ENCODE measurements at regions of chr5 and their contacts with region 1.

Region 1: GRCh38 chr5:155418960-155419579 is 405.5 kb downstream of the KIF4B start:
- DNase-seq: no peak
- ATAC-seq: no peak
- H3K4me3 ChIP-seq: no peak overlapping the region
- H3K27ac ChIP-seq: no peak overlapping the region
- H3K4me1 ChIP-seq: no peaks in the 10 kb centered on the region
- H3K27me3 ChIP-seq: no peaks in the 10 kb centered on the region
- CTCF ChIP-seq: no peak
- EP300 ChIP-seq: no peak
- POLR2A ChIP-seq: no peak
- RAD21 ChIP-seq: no peak

Region 2: GRCh38 chr5:155460501-155460931 is 41.4 kb after region 1 on chr5:
- CTCF ChIA-PET with region 1: no interaction called
- POLR2A ChIA-PET with region 1: no interaction called
- RAD21 ChIA-PET with region 1: no interaction called
- SMC1A ChIA-PET with region 1: no interaction called
- in situ Hi-C with region 1: no loop called
- intact Hi-C with region 1: no loop called
- DNase-seq: no peak
- ATAC-seq: no peak
- H3K4me3 ChIP-seq: no peak overlapping the region
- H3K27ac ChIP-seq: no peak overlapping the region
- H3K4me1 ChIP-seq: no peaks in the 10 kb centered on the region
- H3K27me3 ChIP-seq: no peaks in the 10 kb centered on the region
- CTCF ChIP-seq: no peak
- EP300 ChIP-seq: no peak
- POLR2A ChIP-seq: no peak
- RAD21 ChIP-seq: no peak

Region 3: GRCh38 chr5:155514105-155514563 is 95.1 kb after region 1 on chr5:
- CTCF ChIA-PET with region 1: no interaction called
- POLR2A ChIA-PET with region 1: no interaction called
- RAD21 ChIA-PET with region 1: no interaction called
- SMC1A ChIA-PET with region 1: no interaction called
- in situ Hi-C with region 1: no loop called
- intact Hi-C with region 1: loop called (anchors 5 kb)
- DNase-seq: no peak
- ATAC-seq: no peak
- H3K4me3 ChIP-seq: no peak overlapping the region
- H3K27ac ChIP-seq: no peak overlapping the region
- H3K4me1 ChIP-seq: no peaks in the 10 kb centered on the region
- H3K27me3 ChIP-seq: no peaks in the 10 kb centered on the region
- CTCF ChIP-seq: no peak
- EP300 ChIP-seq: no peak
- POLR2A ChIP-seq: no peak
- RAD21 ChIP-seq: no peak